AG04449 (cell line): ENCODE measurements at regions of chr18 and their contacts with region 1.

Region 1: GRCh38 chr18:34322365-34323289 is 97.9 kb upstream of the NOL4 start:
- DNase-seq: no peak
- H3K4me3 ChIP-seq: no peak overlapping the region
- CTCF ChIP-seq: peak; percentile 64

Region 2: DNA sequence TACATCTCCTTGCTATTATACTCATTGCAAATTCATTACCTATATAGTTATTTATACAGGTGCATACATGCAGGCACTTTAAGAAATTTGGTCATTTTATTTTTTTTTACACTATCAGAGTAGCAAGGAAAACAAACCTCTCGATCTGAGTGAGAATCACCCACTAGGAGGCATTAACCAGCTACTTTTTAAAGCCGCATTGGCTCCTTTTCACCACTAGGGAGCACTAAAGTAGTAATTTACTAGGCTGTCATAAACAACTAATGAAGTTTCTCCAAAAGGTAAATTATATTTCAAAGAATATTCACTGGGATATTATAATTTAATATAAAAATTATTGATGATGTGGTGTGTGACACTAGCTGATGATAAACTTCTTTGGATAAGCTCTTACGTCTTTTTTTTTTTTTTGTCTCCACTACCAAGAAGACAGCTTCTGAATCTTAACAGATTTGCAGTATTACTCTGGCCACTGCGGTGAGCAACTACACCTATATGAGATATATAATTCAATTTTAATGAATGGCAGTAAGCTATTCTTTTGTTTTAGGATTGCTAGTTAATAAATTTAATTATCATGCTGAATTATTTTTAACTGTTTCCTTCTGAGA is 199.8 kb before region 1 on chr18:
- CTCF ChIA-PET with region 1: interaction called, 71 read pairs
- POLR2A ChIA-PET with region 1: no interaction called
- DNase-seq: no peak
- H3K4me3 ChIP-seq: no peak overlapping the region
- CTCF ChIP-seq: peak; percentile 78

Region 3: DNA sequence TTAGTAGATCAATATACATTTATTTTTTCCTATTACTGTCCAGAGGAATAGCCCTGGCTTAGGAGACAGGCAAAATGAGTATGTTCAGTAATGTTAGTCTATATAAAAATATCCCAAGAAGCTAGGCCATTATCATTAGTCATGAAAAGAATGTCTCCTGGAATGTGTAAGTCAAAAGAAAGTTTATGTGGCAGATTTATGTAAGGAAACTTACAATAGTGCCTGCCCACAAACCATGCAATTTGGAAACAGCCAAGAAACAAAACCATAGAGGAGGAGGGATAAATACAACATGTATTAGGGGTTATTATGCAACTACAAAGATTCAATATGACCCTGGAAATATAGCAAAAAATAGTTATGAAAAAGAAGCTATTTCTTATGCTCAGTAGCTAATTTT is 194.2 kb before region 1 on chr18:
- CTCF ChIA-PET with region 1: interaction called, 71 read pairs
- POLR2A ChIA-PET with region 1: no interaction called
- DNase-seq: no peak
- H3K4me3 ChIP-seq: no peak overlapping the region
- CTCF ChIP-seq: no peak